HEK293 (cell line): ENCODE measurements at regions of chr1 and their contacts with region 1.

Region 1: GRCh38 chr1:42173155-42173933 is 8.8 kb upstream of the GUCA2A start:
- H3K4me3 ChIP-seq: no peak overlapping the region
- H3K27ac ChIP-seq: no peak overlapping the region
- H3K4me1 ChIP-seq: peaks cover 11% of the 10 kb centered on the region
- CTCF ChIP-seq: peak; percentile 81

Region 2: DNA sequence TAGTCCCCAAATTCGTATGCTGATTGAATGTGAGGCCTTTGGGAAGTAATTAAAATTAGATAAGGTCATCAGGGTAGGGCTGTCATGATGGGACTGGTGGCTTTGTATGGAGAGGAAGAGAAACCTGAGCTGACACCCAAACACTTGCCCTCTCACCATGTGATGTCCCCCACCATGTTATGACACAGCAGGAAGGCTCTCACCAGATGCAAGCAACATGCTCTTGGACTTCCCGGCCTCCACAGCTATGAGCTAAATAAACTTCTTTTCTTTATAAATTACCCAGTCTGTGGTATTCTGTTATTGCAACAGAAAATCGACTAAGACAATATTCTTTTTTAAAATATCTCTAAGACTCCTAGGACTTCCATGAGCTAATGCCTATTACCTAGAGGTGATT is 63.7 kb before region 1 on chr1:
- CTCF ChIA-PET with region 1: no interaction called
- POLR2A ChIA-PET with region 1: no interaction called
- H3K4me3 ChIP-seq: no peak overlapping the region
- H3K27ac ChIP-seq: no peak overlapping the region
- H3K4me1 ChIP-seq: no peaks in the 10 kb centered on the region
- CTCF ChIP-seq: no peak

Region 3: GRCh38 chr1:42146626-42147320 is 26.6 kb before region 1 on chr1:
- CTCF ChIA-PET with region 1: interaction called, 25 read pairs
- POLR2A ChIA-PET with region 1: no interaction called
- H3K4me3 ChIP-seq: no peak overlapping the region
- H3K27ac ChIP-seq: no peak overlapping the region
- H3K4me1 ChIP-seq: no peaks in the 10 kb centered on the region
- CTCF ChIP-seq: peak; percentile 86

Region 4: GRCh38 chr1:42186152-42186551 is 12.8 kb after region 1 on chr1:
- CTCF ChIA-PET with region 1: interaction called, 23 read pairs
- POLR2A ChIA-PET with region 1: no interaction called
- H3K4me3 ChIP-seq: no peak overlapping the region
- H3K27ac ChIP-seq: no peak overlapping the region
- H3K4me1 ChIP-seq: no peaks in the 10 kb centered on the region
- CTCF ChIP-seq: no peak

Region 5: DNA sequence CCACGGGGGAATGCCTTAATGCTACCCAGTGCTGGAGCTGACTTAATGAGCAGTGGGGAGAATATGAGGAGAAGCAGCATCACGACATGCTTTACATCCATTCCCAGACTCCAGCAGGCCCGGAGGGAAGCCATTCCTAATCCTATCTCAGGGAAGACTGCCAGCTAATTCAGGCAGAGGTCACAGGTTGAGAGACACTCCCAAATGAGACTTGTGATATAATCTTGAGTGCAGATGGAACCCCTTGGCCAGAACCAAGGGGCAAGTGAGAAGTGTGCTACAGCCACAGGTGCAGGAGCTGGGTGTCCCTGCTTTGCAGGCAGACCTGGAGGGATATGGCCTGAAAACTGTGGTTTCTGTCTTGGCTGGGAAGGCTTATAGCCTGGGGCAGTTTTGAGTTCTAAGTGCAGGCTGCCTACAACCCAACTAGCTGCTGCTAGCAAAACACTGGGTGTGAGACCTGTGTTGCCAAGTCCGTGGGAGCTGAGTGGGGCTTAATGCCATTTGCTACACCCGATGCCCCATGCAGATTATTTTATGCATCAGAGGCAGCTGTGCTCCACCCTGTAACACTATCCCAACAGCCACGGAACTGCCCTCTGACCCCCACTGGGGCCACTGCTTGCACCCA is 36.4 kb after region 1 on chr1:
- CTCF ChIA-PET with region 1: interaction called, 10 read pairs
- POLR2A ChIA-PET with region 1: no interaction called
- H3K4me3 ChIP-seq: no peak overlapping the region
- H3K27ac ChIP-seq: no peak overlapping the region
- H3K4me1 ChIP-seq: peaks cover 1% of the 10 kb centered on the region; the same call in 1 of the 2 replicates
- CTCF ChIP-seq: no peak

Region 6: GRCh38 chr1:42529724-42530181 is 356.4 kb after region 1 on chr1:
- CTCF ChIA-PET with region 1: no interaction called
- POLR2A ChIA-PET with region 1: no interaction called
- H3K4me3 ChIP-seq: no peak overlapping the region
- H3K27ac ChIP-seq: no peak overlapping the region
- H3K4me1 ChIP-seq: no peaks in the 10 kb centered on the region
- CTCF ChIP-seq: no peak

Region 7: DNA sequence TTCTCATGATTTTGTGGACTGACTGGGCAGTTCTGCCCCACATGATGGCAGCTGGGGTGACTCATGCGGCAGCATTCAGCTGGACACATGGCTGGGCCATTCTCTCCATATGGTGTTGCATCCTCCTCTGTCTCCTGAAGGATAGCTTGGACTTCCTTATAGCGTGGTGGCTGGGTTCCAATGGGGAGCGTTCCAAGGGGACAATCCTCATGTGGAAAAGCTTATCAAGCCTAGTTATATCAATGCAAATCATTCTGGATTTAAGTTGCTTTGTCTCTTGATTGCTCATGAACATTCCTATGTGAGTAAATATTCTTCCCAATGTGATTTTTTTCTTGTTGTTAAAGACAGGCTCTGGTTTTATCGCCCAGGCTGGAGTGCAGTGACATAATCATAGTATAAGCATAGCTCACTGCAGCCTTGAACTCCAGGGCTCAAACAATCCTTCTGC is 798.5 kb after region 1 on chr1:
- CTCF ChIA-PET with region 1: no interaction called
- POLR2A ChIA-PET with region 1: interaction called, 10 read pairs
- H3K4me3 ChIP-seq: no peak overlapping the region
- H3K27ac ChIP-seq: no peak overlapping the region
- H3K4me1 ChIP-seq: no peaks in the 10 kb centered on the region
- CTCF ChIP-seq: no peak